ENCODE measurements at regions of chr4 and their contacts with region 1.

Region 1: GRCh38 chr4:119165767-119166166 is 30.1 kb downstream of the MYOZ2 start:
- DNase-seq: no peak
- ATAC-seq: no peak

Region 2: GRCh38 chr4:118989098-118990080 is 176.4 kb before region 1 on chr4:
- intact Hi-C with region 1: loop called (anchors 5 kb)
- DNase-seq: no peak
- ATAC-seq: peak; percentile 42

Region 3: GRCh38 chr4:119149110-119149509 is 16.7 kb before region 1 on chr4:
- intact Hi-C with region 1: no loop called
- DNase-seq: no peak
- ATAC-seq: no peak

Measured in Right ventricle myocardium inferior (tissue), 1 donor.